ENCODE measurements at regions of chr11 and their contacts with region 1.

Region 1: DNA sequence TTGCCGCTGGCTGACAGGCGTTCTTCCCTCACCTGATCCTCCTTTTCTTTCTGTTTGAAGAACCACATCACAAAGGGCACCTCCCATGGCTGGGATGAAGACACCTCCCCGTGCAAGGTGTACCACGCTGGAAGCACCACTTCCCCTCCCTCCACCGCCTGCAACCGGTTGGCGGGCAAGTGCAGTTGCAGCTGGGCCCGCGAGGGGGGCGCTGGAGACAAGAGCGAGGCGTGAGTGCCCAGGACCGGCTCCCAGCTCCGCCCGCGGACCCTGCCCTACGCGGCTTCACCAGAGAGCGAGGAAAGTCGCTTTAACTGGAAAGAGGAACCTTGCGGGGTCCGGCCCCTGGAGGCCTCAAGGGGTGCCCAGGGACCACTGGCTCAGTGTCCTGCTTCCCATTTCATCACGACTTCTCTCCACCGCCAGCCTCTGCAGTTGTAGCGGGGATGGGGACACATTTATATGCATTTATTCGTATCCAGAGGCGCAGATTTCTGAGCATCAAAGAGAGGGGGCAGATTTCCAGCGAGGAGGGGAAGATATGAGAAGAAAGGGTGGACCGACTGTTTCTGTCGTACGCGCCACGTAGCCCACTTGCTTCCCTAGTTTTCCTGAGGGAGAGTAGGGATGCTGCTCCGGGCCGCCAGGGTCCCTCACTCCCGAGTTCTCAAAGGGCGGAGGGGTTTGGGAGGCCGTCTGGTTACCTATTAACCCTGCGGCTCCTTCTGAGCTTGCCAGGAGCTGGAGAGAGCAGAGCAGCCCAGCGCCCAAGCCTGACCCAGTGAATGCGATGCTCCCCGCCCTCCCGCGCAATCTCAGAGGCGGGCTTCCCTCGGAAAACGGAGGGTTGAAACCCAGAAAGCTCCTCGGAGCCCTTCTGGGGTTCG is 3.5 kb downstream of the ESAM start:
- DNase-seq: peak; percentile 70 to 78
- ATAC-seq: peak; percentile 28 to 58 (median 50)
- H3K4me3 ChIP-seq: peak overlapping the region; percentile 31 to 94 (median 78)
- H3K27ac ChIP-seq: peak overlapping the region; percentile 76 to 99 (median 95)
- H3K4me1 ChIP-seq: peaks cover 14 to 87% (median 72%) of the 10 kb centered on the region in 9 donors
- H3K27me3 ChIP-seq: peaks cover 0 to 76% (median 57%) of the 10 kb centered on the region in 7 donors
- CTCF ChIP-seq: peak; percentile 61 to 81 (median 73)

Region 2: GRCh38 chr11:124717786-124718651 is 40.5 kb before region 1 on chr11:
- intact Hi-C with region 1: loop called in 1 of 10 experiments (anchors 5 kb)
- DNase-seq: peak; percentile 32 to 71
- ATAC-seq: peak; percentile 49 to 82 (median 68)
- H3K4me3 ChIP-seq: peak overlapping the region in 9 of 10 donors; percentile 33 to 56 (median 49)
- H3K27ac ChIP-seq: peak overlapping the region in 9 of 10 donors; percentile 12 to 68 (median 50)
- H3K4me1 ChIP-seq: peaks cover 4 to 34% (median 15%) of the 10 kb centered on the region in 9 donors
- H3K27me3 ChIP-seq: peaks cover 0 to 76% (median 40%) of the 10 kb centered on the region in 7 donors
- CTCF ChIP-seq: no peak

Region 3: GRCh38 chr11:124800226-124800929 is 41.8 kb after region 1 on chr11 and contains the start of gene MSANTD2:
- intact Hi-C with region 1: loop called in 3 of 10 experiments (anchors 5 kb)
- DNase-seq: peak; percentile 83 to 86
- ATAC-seq: peak; percentile 96 to 99 (median 98)
- H3K4me3 ChIP-seq: peak within 1 kb of the TSS; percentile 65 to 93 (median 84)
- H3K27ac ChIP-seq: peak within 1 kb of the TSS; percentile 94 to 100 (median 98)
- H3K4me1 ChIP-seq: peaks cover 5 to 37% (median 33%) of the 10 kb centered on the region in 9 donors
- H3K27me3 ChIP-seq: peaks cover 0 to 4% (median 0%) of the 10 kb centered on the region in 7 donors
- CTCF ChIP-seq: no peak
- total RNA-seq, gene MSANTD2: 2.4 to 4.6 (median 3.1) TPM

Measured in heart right ventricle (tissue), 16 donors.